Prostate gland (tissue), 2 donors: ENCODE measurements at regions of chr2 and their contacts with region 1.

Region 1: GRCh38 chr2:191051825-191052778 is 38.1 kb upstream of the STAT1 start:
- DNase-seq: peak; percentile 11
- H3K4me3 ChIP-seq: no peak overlapping the region
- H3K27ac ChIP-seq: no peak overlapping the region
- H3K4me1 ChIP-seq: no peaks in the 10 kb centered on the region
- H3K27me3 ChIP-seq: no peaks in the 10 kb centered on the region
- CTCF ChIP-seq: peak in 3 of 4 experiments; percentile 48 to 66 (median 64)
- POLR2A ChIP-seq: no peak

Region 2: DNA sequence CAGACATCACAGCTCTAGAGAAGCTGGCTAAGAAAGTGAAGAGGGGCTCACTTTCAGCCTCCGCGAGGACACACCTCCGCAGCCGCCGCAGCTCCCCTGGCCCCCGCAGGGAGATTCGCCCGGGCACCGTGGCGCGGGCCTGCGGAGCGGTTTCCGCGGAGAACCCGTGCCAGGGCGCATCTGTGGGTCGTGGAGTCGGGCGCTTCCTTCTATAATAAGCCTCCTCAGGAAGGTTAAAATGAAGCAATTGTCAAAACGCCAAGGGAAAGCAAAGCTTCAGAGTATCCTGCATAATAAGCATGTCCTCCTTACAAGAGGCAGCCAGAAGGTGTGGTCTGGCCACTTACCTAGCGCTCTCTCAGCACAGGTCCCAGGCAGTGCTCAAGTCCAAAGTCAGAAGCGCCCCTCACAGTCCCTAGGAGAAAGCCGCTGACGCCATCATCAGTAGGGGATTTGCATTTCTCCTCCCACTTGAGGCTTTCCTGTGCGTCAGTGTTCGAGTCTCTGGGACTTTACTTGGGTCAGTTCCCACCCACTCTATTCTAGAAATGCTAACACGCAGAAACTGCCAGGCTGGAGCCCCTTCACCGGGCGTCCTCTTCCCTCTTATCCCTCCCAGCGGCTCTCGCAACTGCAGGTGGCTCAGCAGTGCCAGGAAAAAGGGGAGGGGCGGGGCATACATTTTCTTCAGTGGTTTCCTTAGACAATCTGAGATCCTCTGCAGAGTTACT is 98.7 kb after region 1 on chr2 and contains the start of gene STAT4:
- intact Hi-C with region 1: loop called (anchors 5 kb)
- DNase-seq: peak; percentile 16
- H3K4me3 ChIP-seq: peak within 1 kb of the TSS; percentile 28
- H3K27ac ChIP-seq: peak within 1 kb of the TSS in 1 of 2 donors; percentile 16
- H3K4me1 ChIP-seq: no peaks in the 10 kb centered on the region
- H3K27me3 ChIP-seq: no peaks in the 10 kb centered on the region
- CTCF ChIP-seq: no peak
- POLR2A ChIP-seq: no peak
- total RNA-seq, gene STAT4: 0.41 to 8.8 TPM

Region 3: GRCh38 chr2:191245046-191245868 is 193.2 kb after region 1 on chr2 and contains the start of gene MYO1B:
- intact Hi-C with region 1: no loop called
- DNase-seq: peak; percentile 77
- H3K4me3 ChIP-seq: peak within 1 kb of the TSS; percentile 64 to 76
- H3K27ac ChIP-seq: peak within 1 kb of the TSS; percentile 65 to 68
- H3K4me1 ChIP-seq: no peaks in the 10 kb centered on the region
- H3K27me3 ChIP-seq: no peaks in the 10 kb centered on the region
- CTCF ChIP-seq: peak; percentile 18 to 77 (median 64)
- POLR2A ChIP-seq: peak; percentile 81
- total RNA-seq, gene MYO1B: 22.4 to 38.3 TPM

Region 4: GRCh38 chr2:191521608-191522208 is 469.6 kb after region 1 on chr2:
- intact Hi-C with region 1: loop called (anchors 10 kb)
- DNase-seq: no peak
- H3K4me3 ChIP-seq: no peak overlapping the region
- H3K27ac ChIP-seq: no peak overlapping the region
- H3K4me1 ChIP-seq: no peaks in the 10 kb centered on the region
- H3K27me3 ChIP-seq: no peaks in the 10 kb centered on the region
- CTCF ChIP-seq: peak; percentile 38 to 86 (median 74)
- POLR2A ChIP-seq: no peak